Ascending aorta (tissue), 2 donors: ENCODE measurements at regions of chr13 and their contacts with region 1.

Region 1: DNA sequence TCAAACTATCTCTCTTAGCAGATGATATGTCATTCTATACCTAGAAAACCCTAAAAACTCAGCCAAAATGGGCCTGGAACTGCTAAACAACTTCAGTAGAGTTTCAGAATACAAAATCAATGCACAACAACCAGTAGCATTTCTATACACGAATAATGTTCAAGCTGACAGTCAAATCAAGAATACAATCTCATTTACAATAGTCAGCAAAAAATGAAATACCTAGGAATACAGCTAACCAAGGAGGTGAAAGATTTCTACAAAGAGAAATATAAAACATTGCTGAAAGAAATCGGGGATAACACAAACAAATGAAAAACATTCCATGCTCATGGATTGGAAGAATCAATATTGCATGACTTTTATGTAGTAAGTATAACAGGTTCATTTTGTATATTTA is 804.8 kb downstream of the SLITRK1 start:
- DNase-seq: no peak
- H3K4me3 ChIP-seq: no peak overlapping the region
- H3K27ac ChIP-seq: no peak overlapping the region
- H3K4me1 ChIP-seq: no peaks in the 10 kb centered on the region
- H3K27me3 ChIP-seq: no peaks in the 10 kb centered on the region
- CTCF ChIP-seq: no peak

Region 2: DNA sequence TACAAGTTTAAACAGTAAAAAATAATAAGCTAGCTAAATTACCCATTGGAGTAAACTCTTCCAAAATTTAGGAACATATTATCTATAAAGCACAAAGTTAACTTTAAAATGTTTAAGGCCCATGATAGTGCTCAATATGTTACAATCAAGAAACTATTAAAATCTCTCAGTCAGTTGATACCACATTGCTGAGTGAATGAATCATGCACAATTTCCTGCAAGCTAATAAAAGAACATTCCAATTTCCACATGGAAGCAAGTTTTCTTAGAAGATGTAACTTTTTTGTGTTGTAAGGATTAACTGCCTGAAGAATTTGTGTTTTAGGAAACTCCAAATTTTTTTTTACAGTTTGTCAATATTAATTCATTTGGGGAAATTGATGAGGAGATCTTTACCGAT is 138.1 kb after region 1 on chr13:
- intact Hi-C with region 1: loop called (anchors 5 kb)
- DNase-seq: no peak
- H3K4me3 ChIP-seq: no peak overlapping the region
- H3K27ac ChIP-seq: peak overlapping the region in 1 of 2 donors; percentile 12
- H3K4me1 ChIP-seq: peaks cover 4 to 7% of the 10 kb centered on the region in 2 donors
- H3K27me3 ChIP-seq: no peaks in the 10 kb centered on the region
- CTCF ChIP-seq: no peak